Aorta (tissue), 5 donors: ENCODE measurements at regions of chr20 and their contacts with region 1.

Region 1: DNA sequence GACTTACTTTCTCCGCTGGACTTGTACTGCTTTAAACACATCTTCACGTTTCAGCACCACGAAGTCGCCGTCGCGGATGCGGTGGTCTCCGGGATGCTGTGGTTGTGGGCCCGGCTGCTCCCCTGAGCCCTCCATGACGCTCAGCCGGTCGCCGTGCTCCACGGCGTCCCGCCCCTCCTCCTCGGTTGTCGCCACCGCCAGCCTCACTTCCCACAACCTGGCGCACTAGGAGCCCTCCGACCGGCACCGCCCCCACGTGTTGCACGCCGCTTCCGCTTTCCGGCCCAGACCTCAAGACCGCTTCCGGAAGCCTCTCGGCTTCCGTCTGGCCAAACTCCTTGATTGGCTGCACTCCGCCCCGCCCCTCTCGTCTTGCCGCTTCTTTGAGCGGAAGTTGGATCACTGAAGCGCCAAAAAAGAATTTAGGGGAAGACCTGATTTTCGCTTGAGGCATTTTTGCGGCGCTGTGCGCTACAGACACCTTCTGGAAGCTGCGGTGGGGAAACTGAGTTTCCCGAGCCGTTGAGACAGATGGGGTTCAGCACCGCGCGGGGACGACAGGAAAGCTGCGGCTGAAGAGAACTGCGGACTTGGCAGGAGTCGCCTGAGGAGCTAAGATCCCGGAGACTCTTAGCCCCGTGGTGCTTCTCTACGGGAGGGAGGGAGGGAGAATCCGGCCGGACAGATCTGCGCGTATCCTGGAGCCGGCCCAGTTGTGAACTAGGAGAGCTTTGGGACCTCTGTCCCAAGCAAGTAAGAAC is at the starts of genes MCM8 and TRMT6:
- DNase-seq: peak; percentile 98 to 99
- ATAC-seq: peak; percentile 100
- H3K4me3 ChIP-seq: peak within 1 kb of the TSS; percentile 73 to 77
- H3K27ac ChIP-seq: peak within 1 kb of the TSS in 1 of 2 donors; percentile 65
- H3K4me1 ChIP-seq: no peaks in the 10 kb centered on the region
- H3K27me3 ChIP-seq: no peaks in the 10 kb centered on the region
- total RNA-seq, gene MCM8: 4.7 TPM
- total RNA-seq, gene TRMT6: 8.9 to 11.0 TPM

Region 2: GRCh38 chr20:5749952-5750779 is 200.3 kb before region 1 on chr20 and contains the start of gene SHLD1:
- intact Hi-C with region 1: loop called in 1 of 2 experiments (anchors 5 kb)
- DNase-seq: peak; percentile 90 to 91
- ATAC-seq: peak; percentile 95
- H3K4me3 ChIP-seq: peak within 1 kb of the TSS; percentile 44 to 65
- H3K27ac ChIP-seq: peak within 1 kb of the TSS; percentile 47
- H3K4me1 ChIP-seq: no peaks in the 10 kb centered on the region
- H3K27me3 ChIP-seq: no peaks in the 10 kb centered on the region
- total RNA-seq, gene SHLD1: 2.9 to 5.2 TPM

Region 3: GRCh38 chr20:5918856-5919625 is 31.4 kb before region 1 on chr20:
- intact Hi-C with region 1: no loop called
- DNase-seq: no peak
- ATAC-seq: no peak
- H3K4me3 ChIP-seq: no peak overlapping the region
- H3K27ac ChIP-seq: no peak overlapping the region
- H3K4me1 ChIP-seq: no peaks in the 10 kb centered on the region
- H3K27me3 ChIP-seq: peaks cover 0 to 2% of the 10 kb centered on the region in 2 donors

Region 4: GRCh38 chr20:6000871-6001270 is 50.4 kb after region 1 on chr20:
- intact Hi-C with region 1: loop called in 1 of 2 experiments (anchors 5 kb)
- DNase-seq: no peak
- ATAC-seq: no peak
- H3K4me3 ChIP-seq: no peak overlapping the region
- H3K27ac ChIP-seq: no peak overlapping the region
- H3K4me1 ChIP-seq: no peaks in the 10 kb centered on the region
- H3K27me3 ChIP-seq: no peaks in the 10 kb centered on the region